H1 (cell line): ENCODE measurements at regions of chr5 and their contacts with region 1.

Region 1: DNA sequence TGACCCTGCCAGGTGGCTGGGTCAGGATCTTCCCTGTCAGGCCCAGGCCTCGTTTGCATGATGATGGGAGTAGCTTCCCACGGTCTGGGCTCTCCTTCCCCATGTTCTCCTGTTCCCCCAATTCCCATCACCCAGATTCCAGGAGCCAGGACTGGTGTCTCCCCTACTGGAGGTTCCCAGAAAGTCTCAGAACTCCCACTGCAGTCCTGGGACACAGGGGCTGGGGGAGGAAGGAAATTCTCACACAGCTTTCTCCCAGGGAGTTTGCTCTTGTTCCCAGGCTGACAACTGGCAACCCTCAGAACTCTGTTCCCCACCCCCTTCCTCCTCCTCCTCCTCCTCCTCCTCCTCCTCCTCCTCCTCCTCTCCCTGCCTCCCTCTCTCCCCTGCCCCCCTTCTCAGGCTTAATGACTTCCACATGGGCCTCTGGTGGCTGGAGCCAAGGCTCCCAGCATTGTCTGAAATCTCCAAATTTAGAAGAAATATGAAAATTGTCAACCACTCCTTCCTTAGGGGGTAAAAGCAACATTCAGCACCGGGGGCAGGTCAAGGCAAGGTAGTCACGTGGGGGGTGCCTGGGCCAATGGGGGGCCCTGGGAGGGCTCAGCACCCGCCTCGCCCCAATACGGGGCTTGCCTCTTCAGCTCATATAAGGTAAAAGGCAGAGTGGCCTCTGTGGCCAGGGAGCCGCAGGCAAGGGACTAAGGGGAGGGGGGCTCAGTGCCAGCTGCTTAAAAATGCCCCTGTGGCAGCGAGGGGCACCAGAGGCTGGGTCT is 27.3 kb upstream of the IL17B start:
- DNase-seq: no peak
- H3K4me3 ChIP-seq: no peak overlapping the region
- H3K27ac ChIP-seq: no peak overlapping the region
- H3K4me1 ChIP-seq: peaks cover 0 to 10% (median 5%) of the 10 kb centered on the region in 4 experiments; a peak in 4 of 7 replicates
- H3K27me3 ChIP-seq: no peaks in the 10 kb centered on the region; a peak in 1 of 7 replicates
- CTCF ChIP-seq: peak in 1 of 3 experiments; percentile 9; a peak in 1 of 4 replicates
- EP300 ChIP-seq: no peak
- POLR2A ChIP-seq: no peak
- RAD21 ChIP-seq: no peak

Region 2: GRCh38 chr5:149422366-149423048 is 16.1 kb after region 1 on chr5:
- CTCF ChIA-PET with region 1: interaction called, 315 read pairs
- POLR2A ChIA-PET with region 1: interaction called, 11 read pairs
- DNase-seq: no peak
- H3K4me3 ChIP-seq: no peak overlapping the region
- H3K27ac ChIP-seq: no peak overlapping the region
- H3K4me1 ChIP-seq: peaks cover 13 to 33% (median 20%) of the 10 kb centered on the region in 4 experiments
- H3K27me3 ChIP-seq: no peaks in the 10 kb centered on the region
- CTCF ChIP-seq: no peak
- EP300 ChIP-seq: peak in 1 of 2 experiments; percentile 22; a peak in 1 of 3 replicates
- POLR2A ChIP-seq: no peak
- RAD21 ChIP-seq: no peak